ENCODE measurements at regions of chr13 and their contacts with region 1.

Region 1: GRCh38 chr13:73075546-73075945 is 16.7 kb downstream of the KLF5 start:
- DNase-seq: no peak
- H3K4me3 ChIP-seq: no peak overlapping the region
- H3K27me3 ChIP-seq: no peaks in the 10 kb centered on the region
- CTCF ChIP-seq: no peak

Region 2: GRCh38 chr13:72970956-72971355 is 104.6 kb before region 1 on chr13:
- CTCF ChIA-PET with region 1: no interaction called
- POLR2A ChIA-PET with region 1: no interaction called
- DNase-seq: no peak
- H3K4me3 ChIP-seq: no peak overlapping the region
- H3K27me3 ChIP-seq: no peaks in the 10 kb centered on the region
- CTCF ChIP-seq: no peak

Region 3: DNA sequence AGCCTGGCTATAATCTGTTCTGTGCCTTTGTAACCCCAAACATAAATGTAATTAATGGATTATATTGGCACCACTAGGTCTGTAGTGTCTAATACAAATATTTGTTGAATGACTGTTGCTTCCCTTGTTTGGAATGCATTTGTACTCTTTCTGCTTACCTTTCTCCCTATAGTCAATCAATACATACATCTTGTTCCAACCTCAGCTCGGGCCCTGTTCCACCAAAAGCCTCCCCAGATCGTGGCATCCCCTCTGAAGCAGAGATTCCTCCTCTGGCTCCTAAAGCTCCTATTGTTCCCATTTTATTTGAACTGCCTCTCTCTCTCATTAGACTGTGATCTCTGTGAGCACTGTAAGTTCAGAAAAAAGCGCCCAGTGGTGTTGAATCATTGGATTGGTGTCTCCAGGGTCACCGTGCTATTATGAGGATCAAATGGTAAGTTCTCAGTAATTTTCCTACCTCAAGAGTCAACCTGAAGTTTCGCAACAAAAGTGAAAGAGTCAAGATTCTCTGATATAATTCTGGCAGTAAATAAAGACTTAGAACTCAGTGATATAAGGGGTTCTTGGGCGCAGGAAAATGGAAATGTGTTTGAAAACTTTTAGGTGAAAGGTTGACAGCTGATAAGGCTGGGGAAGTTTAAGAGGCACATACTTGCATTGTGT is 134.8 kb after region 1 on chr13:
- CTCF ChIA-PET with region 1: no interaction called
- POLR2A ChIA-PET with region 1: no interaction called
- DNase-seq: no peak
- H3K4me3 ChIP-seq: no peak overlapping the region
- H3K27me3 ChIP-seq: no peaks in the 10 kb centered on the region
- CTCF ChIP-seq: no peak

Region 4: DNA sequence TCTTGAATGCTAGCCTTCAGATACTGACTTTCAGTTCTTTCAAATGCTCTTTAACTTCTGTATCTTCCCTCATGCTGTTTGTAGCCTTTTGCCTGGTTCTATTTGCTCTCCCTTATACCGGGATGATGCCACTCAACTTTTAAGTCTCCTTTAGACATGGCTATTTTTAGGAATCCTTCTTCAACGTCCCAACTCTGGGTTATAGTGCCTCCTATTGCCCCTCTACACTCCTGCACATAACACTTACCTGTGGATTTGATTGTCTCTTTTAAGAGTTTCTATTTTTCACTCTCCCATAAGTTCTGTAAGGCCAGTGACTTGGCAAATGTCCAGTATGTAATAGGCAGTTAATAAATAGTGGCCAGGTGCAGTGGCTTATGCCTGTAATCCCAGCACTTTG is 326.2 kb after region 1 on chr13:
- CTCF ChIA-PET with region 1: no interaction called
- POLR2A ChIA-PET with region 1: interaction called, 18 read pairs
- DNase-seq: no peak
- H3K4me3 ChIP-seq: no peak overlapping the region
- H3K27me3 ChIP-seq: peaks cover 3% of the 10 kb centered on the region
- CTCF ChIP-seq: no peak

Region 5: GRCh38 chr13:73544175-73544574 is 468.6 kb after region 1 on chr13:
- CTCF ChIA-PET with region 1: no interaction called
- POLR2A ChIA-PET with region 1: no interaction called
- DNase-seq: no peak
- H3K4me3 ChIP-seq: no peak overlapping the region
- H3K27me3 ChIP-seq: no peaks in the 10 kb centered on the region
- CTCF ChIP-seq: no peak

Region 6: GRCh38 chr13:73677048-73677601 is 601.6 kb after region 1 on chr13:
- CTCF ChIA-PET with region 1: no interaction called
- POLR2A ChIA-PET with region 1: no interaction called
- DNase-seq: no peak
- H3K4me3 ChIP-seq: no peak overlapping the region
- H3K27me3 ChIP-seq: no peaks in the 10 kb centered on the region
- CTCF ChIP-seq: no peak